OCI-LY7 (cell line): ENCODE measurements at regions of chr7 and their contacts with region 1.

Region 1: GRCh38 chr7:13279854-13280435 is 592.5 kb downstream of the ARL4A start:
- DNase-seq: peak; percentile 56
- H3K4me3 ChIP-seq: no peak overlapping the region
- H3K27ac ChIP-seq: no peak overlapping the region
- H3K4me1 ChIP-seq: no peaks in the 10 kb centered on the region
- CTCF ChIP-seq: peak; percentile 84

Region 2: DNA sequence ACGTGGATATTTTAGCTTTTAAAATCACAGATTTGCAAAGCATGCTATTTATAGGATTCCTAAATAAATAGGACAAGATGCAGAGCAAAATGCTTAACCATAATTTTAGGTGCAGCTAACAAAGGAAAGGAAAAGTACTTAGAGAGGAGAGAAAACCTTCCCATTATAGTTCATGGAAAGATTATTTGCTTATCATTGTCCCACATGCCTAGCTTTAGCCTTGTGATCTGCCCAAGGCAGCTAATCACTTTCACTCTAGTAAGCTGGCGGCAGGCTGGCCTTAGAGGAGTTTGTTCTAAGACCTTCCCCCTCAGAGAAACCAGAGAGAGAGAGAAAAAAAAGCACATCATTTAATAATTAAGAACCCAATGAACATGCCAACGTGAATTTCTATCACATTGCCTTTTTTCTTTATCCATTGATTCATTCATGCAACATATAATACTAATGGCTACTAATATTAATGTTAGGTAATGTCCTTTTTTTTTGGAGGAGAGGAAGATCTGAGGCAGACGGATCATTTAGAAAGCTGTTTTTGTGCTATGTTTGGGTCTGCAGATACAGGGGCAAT is 317.9 kb before region 1 on chr7:
- CTCF ChIA-PET with region 1: no interaction called
- POLR2A ChIA-PET with region 1: no interaction called
- intact Hi-C with region 1: no loop called
- DNase-seq: no peak
- H3K4me3 ChIP-seq: no peak overlapping the region
- H3K27ac ChIP-seq: no peak overlapping the region
- H3K4me1 ChIP-seq: no peaks in the 10 kb centered on the region
- CTCF ChIP-seq: no peak

Region 3: DNA sequence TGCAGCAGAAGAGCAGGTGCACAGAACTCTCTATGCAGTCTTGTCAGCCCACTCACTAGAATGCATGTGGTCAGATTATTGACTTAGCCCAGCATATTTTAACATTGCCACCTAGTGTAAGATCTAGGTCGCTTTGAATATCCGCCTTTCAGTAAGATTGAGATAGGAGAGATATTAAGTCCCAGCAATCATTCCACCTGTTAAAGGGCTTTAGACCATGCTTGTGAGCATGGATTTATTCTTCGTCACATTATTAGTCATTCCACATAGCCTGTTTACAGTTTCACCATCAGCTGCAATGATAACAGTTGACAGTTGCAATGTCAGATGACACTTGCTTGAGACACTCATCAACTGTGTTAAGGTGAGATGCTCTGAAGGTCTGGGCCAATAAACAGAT is 100.8 kb before region 1 on chr7:
- CTCF ChIA-PET with region 1: no interaction called
- POLR2A ChIA-PET with region 1: no interaction called
- intact Hi-C with region 1: no loop called
- DNase-seq: peak; percentile 3
- H3K4me3 ChIP-seq: no peak overlapping the region
- H3K27ac ChIP-seq: no peak overlapping the region
- H3K4me1 ChIP-seq: no peaks in the 10 kb centered on the region
- CTCF ChIP-seq: 0 out of 2 replicates have a peak, but pooled peaks have one; percentile 17

Region 4: GRCh38 chr7:13742811-13743210 is 462.9 kb after region 1 on chr7:
- CTCF ChIA-PET with region 1: no interaction called
- POLR2A ChIA-PET with region 1: no interaction called
- intact Hi-C with region 1: loop called (anchors 5 kb)
- DNase-seq: peak; percentile 1
- H3K4me3 ChIP-seq: no peak overlapping the region
- H3K27ac ChIP-seq: no peak overlapping the region
- H3K4me1 ChIP-seq: no peaks in the 10 kb centered on the region
- CTCF ChIP-seq: peak; percentile 58

Region 5: DNA sequence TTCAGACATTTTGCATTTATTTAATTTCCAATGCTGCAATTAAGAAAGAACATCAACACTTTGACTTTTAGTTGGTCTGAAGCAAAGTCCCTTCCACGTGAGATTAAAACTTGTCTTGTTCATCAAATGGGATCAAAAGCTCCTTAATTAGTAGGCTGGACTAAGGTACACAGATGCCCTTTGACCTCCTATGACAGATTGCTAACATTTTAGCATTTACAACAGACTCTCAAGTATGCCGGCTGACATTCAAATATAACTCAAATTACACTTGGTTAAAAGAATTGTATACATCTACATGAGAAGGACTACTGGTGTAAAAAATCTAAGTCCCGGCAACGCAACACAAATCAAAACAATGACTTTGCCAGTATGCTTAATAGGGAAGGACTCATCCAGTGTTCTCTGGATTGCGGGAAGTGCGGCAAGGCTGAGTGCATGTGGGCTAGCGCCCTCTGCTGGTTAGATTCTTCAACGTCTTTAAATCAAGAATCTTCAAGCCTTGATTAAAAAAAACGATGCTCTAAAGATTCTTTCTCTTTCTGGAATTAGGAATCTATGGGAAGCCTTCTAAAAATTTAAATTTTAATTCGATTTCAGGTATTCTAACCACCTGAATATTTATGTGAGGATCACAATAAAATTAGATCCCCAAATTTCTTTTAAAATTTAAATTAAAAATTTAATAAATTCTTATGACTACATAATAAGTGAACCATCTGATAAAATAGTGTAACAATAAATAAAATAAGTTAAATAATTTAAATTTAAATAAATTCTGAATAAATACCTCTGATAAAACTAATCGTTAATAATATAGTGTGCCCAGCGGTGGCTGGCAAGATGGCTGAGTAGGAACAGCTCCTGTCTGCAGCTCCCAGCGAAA is 1177.9 kb after region 1 on chr7:
- CTCF ChIA-PET with region 1: no interaction called
- POLR2A ChIA-PET with region 1: interaction called, 3 read pairs
- intact Hi-C with region 1: loop called (anchors 5 kb)
- DNase-seq: peak; percentile 48
- H3K4me3 ChIP-seq: no peak overlapping the region
- H3K27ac ChIP-seq: no peak overlapping the region
- H3K4me1 ChIP-seq: no peaks in the 10 kb centered on the region
- CTCF ChIP-seq: peak; percentile 88

Region 6: GRCh38 chr7:14691597-14692203 is 1411.8 kb after region 1 on chr7:
- CTCF ChIA-PET with region 1: no interaction called
- POLR2A ChIA-PET with region 1: no interaction called
- intact Hi-C with region 1: loop called (anchors 5 kb)
- DNase-seq: peak; percentile 47
- H3K4me3 ChIP-seq: no peak overlapping the region
- H3K27ac ChIP-seq: no peak overlapping the region
- H3K4me1 ChIP-seq: no peaks in the 10 kb centered on the region
- CTCF ChIP-seq: peak; percentile 97